A673 (cell line): ENCODE measurements at regions of chrX and their contacts with region 1.

Region 1: DNA sequence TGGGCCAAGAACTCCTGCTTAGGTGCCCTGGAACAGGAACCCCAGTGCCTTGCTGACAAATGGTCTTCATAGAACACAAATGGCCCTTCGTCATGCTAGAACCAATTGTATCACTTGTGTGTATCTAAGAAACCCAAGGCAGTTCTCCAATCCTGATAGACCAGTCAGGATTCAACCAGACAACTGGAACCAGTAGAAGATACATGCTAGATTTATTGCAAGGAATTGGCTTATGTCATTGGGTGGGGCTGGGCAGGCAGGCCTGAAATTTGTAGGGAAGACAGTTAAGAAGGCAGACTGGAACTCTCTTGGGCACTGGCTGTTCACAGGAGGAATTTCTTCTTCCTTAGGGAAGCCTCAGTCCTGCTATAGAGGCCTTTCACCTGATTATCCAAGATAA is 17.0 kb upstream of the TBL1X start:
- DNase-seq: no peak
- H3K4me3 ChIP-seq: no peak overlapping the region
- H3K27ac ChIP-seq: no peak overlapping the region
- H3K4me1 ChIP-seq: no peaks in the 10 kb centered on the region
- H3K27me3 ChIP-seq: no peaks in the 10 kb centered on the region
- CTCF ChIP-seq: no peak

Region 2: DNA sequence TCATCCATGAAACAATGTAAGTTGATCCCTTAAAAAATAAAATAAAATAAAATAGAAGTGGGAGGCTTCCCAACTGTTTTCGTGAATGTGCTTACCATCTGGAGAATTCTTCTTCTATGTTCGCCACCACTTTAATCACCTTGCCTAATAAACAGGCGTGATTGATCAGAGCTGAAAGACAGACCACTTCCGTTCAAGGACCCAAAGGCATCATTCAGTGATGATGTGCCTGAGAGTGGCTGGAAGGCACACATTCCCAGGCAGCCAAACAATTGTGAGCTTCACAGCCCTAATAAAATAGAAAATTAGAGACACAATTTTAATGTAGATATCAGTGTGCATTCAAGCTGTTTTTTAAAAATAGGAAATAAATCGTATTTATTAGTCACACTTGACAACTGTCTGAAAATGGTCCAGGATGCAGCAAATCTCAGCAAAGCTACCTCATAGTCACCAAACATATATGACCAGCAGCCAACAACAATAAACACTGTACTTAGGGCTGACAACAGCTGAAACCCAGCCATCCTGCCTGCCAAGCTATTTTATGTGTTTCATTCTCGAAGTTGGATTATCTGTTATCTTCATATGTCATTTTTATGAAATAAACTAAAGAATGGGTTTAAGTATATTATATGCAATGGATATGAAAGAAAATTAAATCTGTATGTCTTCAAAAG is 250.8 kb before region 1 on chrX:
- CTCF ChIA-PET with region 1: no interaction called
- POLR2A ChIA-PET with region 1: no interaction called
- intact Hi-C with region 1: no loop called
- DNase-seq: no peak
- H3K4me3 ChIP-seq: no peak overlapping the region
- H3K27ac ChIP-seq: no peak overlapping the region
- H3K4me1 ChIP-seq: no peaks in the 10 kb centered on the region
- H3K27me3 ChIP-seq: no peaks in the 10 kb centered on the region
- CTCF ChIP-seq: no peak

Region 3: DNA sequence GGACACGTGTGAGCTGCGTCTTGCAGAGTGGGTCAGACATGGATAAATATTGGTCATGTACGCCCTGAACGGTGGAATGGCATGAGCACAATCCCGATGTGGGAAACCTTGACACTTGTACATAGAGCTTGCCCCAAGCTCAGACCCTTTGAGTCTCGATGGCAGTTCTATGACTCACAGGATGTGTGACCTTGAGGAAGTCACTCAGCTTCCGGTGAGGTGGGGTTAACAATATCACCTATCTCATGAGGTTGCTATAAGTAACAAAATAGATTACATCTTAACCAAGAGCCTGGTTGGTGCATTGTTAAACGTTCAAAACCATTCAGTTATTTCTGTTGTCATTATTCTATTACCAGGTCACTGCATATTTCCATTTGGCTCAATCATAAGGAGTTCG is 92.2 kb before region 1 on chrX:
- CTCF ChIA-PET with region 1: no interaction called
- POLR2A ChIA-PET with region 1: no interaction called
- intact Hi-C with region 1: no loop called
- DNase-seq: no peak
- H3K4me3 ChIP-seq: no peak overlapping the region
- H3K27ac ChIP-seq: no peak overlapping the region
- H3K4me1 ChIP-seq: no peaks in the 10 kb centered on the region
- H3K27me3 ChIP-seq: no peaks in the 10 kb centered on the region
- CTCF ChIP-seq: no peak

Region 4: GRCh38 chrX:9416632-9417319 is 31.1 kb before region 1 on chrX:
- CTCF ChIA-PET with region 1: no interaction called
- POLR2A ChIA-PET with region 1: interaction called, 16 read pairs
- intact Hi-C with region 1: no loop called
- DNase-seq: peak; percentile 16
- H3K4me3 ChIP-seq: no peak overlapping the region
- H3K27ac ChIP-seq: no peak overlapping the region
- H3K4me1 ChIP-seq: peaks cover 25% of the 10 kb centered on the region
- H3K27me3 ChIP-seq: no peaks in the 10 kb centered on the region
- CTCF ChIP-seq: no peak

Region 5: GRCh38 chrX:9670136-9670814 is 222.4 kb after region 1 on chrX:
- CTCF ChIA-PET with region 1: no interaction called
- POLR2A ChIA-PET with region 1: interaction called, 13 read pairs
- intact Hi-C with region 1: no loop called
- DNase-seq: peak; percentile 64
- H3K4me3 ChIP-seq: no peak overlapping the region
- H3K27ac ChIP-seq: peak overlapping the region; percentile 23
- H3K4me1 ChIP-seq: peaks cover 23% of the 10 kb centered on the region
- H3K27me3 ChIP-seq: no peaks in the 10 kb centered on the region
- CTCF ChIP-seq: no peak